Activated B cell treated with CpG ODN at 0.5 μM for 24 hours (primary cell): ENCODE measurements at regions of chr12 and their contacts with region 1.

Region 1: GRCh38 chr12:94769047-94769420 is 118.7 kb upstream of the TMCC3 start:
- DNase-seq: peak; percentile 26
- ATAC-seq: peak; percentile 86
- H3K4me3 Mint-ChIP-seq: peak overlapping the region; percentile 86
- H3K27ac Mint-ChIP-seq: peak overlapping the region; percentile 98
- H3K4me1 Mint-ChIP-seq: peaks cover 68% of the 10 kb centered on the region
- H3K27me3 Mint-ChIP-seq: no peaks in the 10 kb centered on the region
- CTCF ChIP-seq: no peak

Region 2: GRCh38 chr12:94560431-94561221 is 208.4 kb before region 1 on chr12:
- CTCF ChIA-PET with region 1: no interaction called
- POLR2A ChIA-PET with region 1: interaction called, 4 read pairs
- intact Hi-C with region 1: loop called (anchors 5 kb)
- DNase-seq: peak; percentile 39
- ATAC-seq: peak; percentile 83
- H3K4me3 Mint-ChIP-seq: peak overlapping the region; percentile 56
- H3K27ac Mint-ChIP-seq: peak overlapping the region; percentile 74
- H3K4me1 Mint-ChIP-seq: peaks cover 27% of the 10 kb centered on the region
- H3K27me3 Mint-ChIP-seq: peaks cover 8% of the 10 kb centered on the region
- CTCF ChIP-seq: no peak

Region 3: GRCh38 chr12:94585626-94586025 is 183.4 kb before region 1 on chr12:
- CTCF ChIA-PET with region 1: no interaction called
- POLR2A ChIA-PET with region 1: no interaction called
- intact Hi-C with region 1: no loop called
- DNase-seq: no peak
- ATAC-seq: no peak
- H3K4me3 Mint-ChIP-seq: no peak overlapping the region
- H3K27ac Mint-ChIP-seq: no peak overlapping the region
- H3K4me1 Mint-ChIP-seq: peaks cover 4% of the 10 kb centered on the region
- H3K27me3 Mint-ChIP-seq: no peaks in the 10 kb centered on the region
- CTCF ChIP-seq: no peak

Region 4: GRCh38 chr12:94710933-94711332 is 58.1 kb before region 1 on chr12:
- CTCF ChIA-PET with region 1: interaction called, 7 read pairs
- POLR2A ChIA-PET with region 1: interaction called, 3 read pairs
- intact Hi-C with region 1: loop called (anchors 1 kb)
- DNase-seq: no peak
- ATAC-seq: peak; percentile 69
- H3K4me3 Mint-ChIP-seq: no peak overlapping the region
- H3K27ac Mint-ChIP-seq: no peak overlapping the region
- H3K4me1 Mint-ChIP-seq: peaks cover 32% of the 10 kb centered on the region
- H3K27me3 Mint-ChIP-seq: no peaks in the 10 kb centered on the region
- CTCF ChIP-seq: no peak

Region 5: GRCh38 chr12:94753036-94753679 is 15.9 kb before region 1 on chr12:
- CTCF ChIA-PET with region 1: no interaction called
- POLR2A ChIA-PET with region 1: no interaction called
- intact Hi-C with region 1: no loop called
- DNase-seq: no peak
- ATAC-seq: no peak
- H3K4me3 Mint-ChIP-seq: no peak overlapping the region
- H3K27ac Mint-ChIP-seq: no peak overlapping the region
- H3K4me1 Mint-ChIP-seq: no peaks in the 10 kb centered on the region
- H3K27me3 Mint-ChIP-seq: no peaks in the 10 kb centered on the region
- CTCF ChIP-seq: no peak

Region 6: GRCh38 chr12:94783862-94784261 is 14.8 kb after region 1 on chr12:
- CTCF ChIA-PET with region 1: interaction called, 3 read pairs
- POLR2A ChIA-PET with region 1: interaction called, 3 read pairs
- intact Hi-C with region 1: loop called (anchors 1 kb)
- DNase-seq: no peak
- ATAC-seq: peak; percentile 64
- H3K4me3 Mint-ChIP-seq: no peak overlapping the region
- H3K27ac Mint-ChIP-seq: no peak overlapping the region
- H3K4me1 Mint-ChIP-seq: peaks cover 31% of the 10 kb centered on the region
- H3K27me3 Mint-ChIP-seq: no peaks in the 10 kb centered on the region
- CTCF ChIP-seq: no peak

Region 7: GRCh38 chr12:94817695-94818075 is 48.7 kb after region 1 on chr12:
- CTCF ChIA-PET with region 1: interaction called, 10 read pairs
- POLR2A ChIA-PET with region 1: interaction called, 43 read pairs
- intact Hi-C with region 1: loop called (anchors 1 kb)
- DNase-seq: no peak
- ATAC-seq: no peak
- H3K4me3 Mint-ChIP-seq: peak overlapping the region; percentile 87
- H3K27ac Mint-ChIP-seq: peak overlapping the region; percentile 97
- H3K4me1 Mint-ChIP-seq: peaks cover 71% of the 10 kb centered on the region
- H3K27me3 Mint-ChIP-seq: no peaks in the 10 kb centered on the region
- CTCF ChIP-seq: no peak

Region 8: DNA sequence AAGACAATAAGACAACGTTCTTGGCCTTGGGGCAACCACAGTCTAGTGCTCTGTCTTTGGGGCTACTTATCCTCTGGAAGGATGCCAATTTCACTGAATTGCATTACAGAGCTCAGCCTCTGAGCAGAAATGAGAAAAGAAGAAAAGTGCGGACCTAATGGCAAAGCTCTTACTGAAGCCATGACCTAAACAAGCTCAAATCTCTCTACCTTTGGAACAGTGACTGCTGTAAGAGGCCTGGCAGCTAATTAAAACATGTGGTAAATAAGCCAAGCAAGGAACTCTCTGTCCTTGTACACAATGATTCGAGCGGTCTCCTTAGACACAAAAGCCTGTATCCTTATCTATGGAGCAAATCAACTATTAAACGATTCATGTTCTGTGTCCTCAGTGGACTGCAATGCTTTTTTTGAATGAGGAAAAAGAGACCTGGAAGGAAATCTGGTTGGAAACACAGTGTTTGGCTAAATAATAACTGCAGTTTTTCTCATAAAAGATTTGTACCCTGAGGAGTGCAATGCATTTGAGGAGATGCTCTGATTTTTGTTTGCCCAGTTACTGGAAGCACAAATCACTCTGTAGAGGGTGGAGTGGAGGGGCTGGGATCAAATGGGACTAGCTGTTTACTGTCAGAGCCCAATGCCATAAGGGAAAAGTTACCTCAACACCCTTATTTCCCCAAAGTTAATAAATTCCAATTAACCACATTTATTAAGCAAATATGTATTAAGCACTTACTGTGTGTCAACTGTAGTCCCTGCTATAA is 120.6 kb after region 1 on chr12:
- CTCF ChIA-PET with region 1: no interaction called
- POLR2A ChIA-PET with region 1: no interaction called
- intact Hi-C with region 1: no loop called
- DNase-seq: no peak
- ATAC-seq: no peak
- H3K4me3 Mint-ChIP-seq: no peak overlapping the region
- H3K27ac Mint-ChIP-seq: no peak overlapping the region
- H3K4me1 Mint-ChIP-seq: no peaks in the 10 kb centered on the region
- H3K27me3 Mint-ChIP-seq: no peaks in the 10 kb centered on the region
- CTCF ChIP-seq: no peak

Region 9: DNA sequence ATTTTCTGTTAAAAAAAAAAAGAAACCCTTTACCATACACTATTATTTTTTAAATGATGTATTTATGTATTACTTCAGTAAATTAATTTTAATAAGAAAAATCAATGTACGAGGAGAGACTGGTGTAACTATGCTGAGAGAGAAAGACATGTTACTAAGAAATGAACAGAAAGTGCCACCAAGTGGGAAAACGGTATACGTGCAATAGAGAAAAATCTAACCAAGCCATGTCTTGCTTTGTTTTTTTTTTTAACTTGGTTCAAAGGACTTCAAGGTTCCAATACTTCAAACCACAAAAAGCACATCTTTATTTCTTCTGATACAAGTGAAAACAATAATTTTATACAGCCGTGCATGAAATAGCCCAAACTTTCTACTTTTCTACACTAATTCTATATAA is 211.5 kb after region 1 on chr12:
- CTCF ChIA-PET with region 1: no interaction called
- POLR2A ChIA-PET with region 1: no interaction called
- intact Hi-C with region 1: loop called (anchors 1 kb)
- DNase-seq: no peak
- ATAC-seq: no peak
- H3K4me3 Mint-ChIP-seq: no peak overlapping the region
- H3K27ac Mint-ChIP-seq: no peak overlapping the region
- H3K4me1 Mint-ChIP-seq: peaks cover 5% of the 10 kb centered on the region
- H3K27me3 Mint-ChIP-seq: no peaks in the 10 kb centered on the region
- CTCF ChIP-seq: no peak

Region 10: DNA sequence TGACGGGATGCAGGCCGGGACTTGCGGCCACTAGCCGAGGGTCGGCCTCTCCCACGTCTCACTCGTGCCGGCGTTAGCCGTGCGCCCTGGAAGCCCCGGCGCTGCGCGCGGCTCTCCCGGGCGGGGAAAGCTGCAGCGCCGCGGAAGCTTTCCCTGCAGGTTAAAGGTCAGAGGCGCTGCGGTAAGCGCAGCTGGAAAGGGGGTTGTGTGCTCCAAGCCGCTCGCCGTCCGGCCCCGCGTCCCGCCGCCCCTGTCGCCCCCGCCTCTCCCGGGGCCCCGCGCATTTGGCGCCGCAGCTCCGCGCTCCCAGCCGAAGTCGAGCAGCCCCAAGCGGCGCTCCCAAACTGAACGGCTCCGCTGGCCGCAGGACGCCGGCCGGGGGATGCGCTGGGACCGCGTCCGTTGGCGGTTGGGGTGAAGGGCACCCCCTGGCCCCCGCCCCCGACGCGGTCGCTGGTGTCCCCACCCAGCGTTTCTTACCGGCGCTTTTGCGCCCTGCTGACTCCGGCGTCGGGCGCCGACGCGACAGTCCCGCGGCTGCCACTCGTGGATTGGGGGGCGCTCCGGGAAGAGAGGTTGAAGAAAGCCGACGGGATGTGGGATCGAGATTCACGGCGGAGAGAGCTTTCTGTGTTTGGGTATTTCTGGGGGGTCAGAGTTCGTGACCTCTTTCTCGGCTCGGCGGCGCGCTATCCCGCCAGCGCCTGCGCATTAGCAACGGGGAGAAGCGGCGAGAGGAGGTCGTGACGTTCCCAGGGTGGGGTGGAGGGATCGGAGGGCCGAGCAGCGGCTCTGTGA is 304.1 kb after region 1 on chr12 and contains the start of gene NR2C1:
- CTCF ChIA-PET with region 1: no interaction called
- POLR2A ChIA-PET with region 1: interaction called, 3 read pairs
- intact Hi-C with region 1: loop called (anchors 5 kb)
- DNase-seq: peak; percentile 83
- ATAC-seq: peak; percentile 99
- H3K4me3 Mint-ChIP-seq: peak within 1 kb of the TSS; percentile 97
- H3K27ac Mint-ChIP-seq: peak within 1 kb of the TSS; percentile 94
- H3K4me1 Mint-ChIP-seq: peaks cover 13% of the 10 kb centered on the region
- H3K27me3 Mint-ChIP-seq: no peaks in the 10 kb centered on the region
- CTCF ChIP-seq: no peak
- total RNA-seq, gene NR2C1: 28.3 and 30.8 TPM in 2 replicates